BJ (cell line): ENCODE measurements at regions of chr7 and their contacts with region 1.

Region 1: GRCh38 chr7:107150375-107151073 is 18.3 kb upstream of the HBP1 start:
- DNase-seq: peak; percentile 21
- H3K4me3 ChIP-seq: no peak overlapping the region
- H3K27me3 ChIP-seq: no peaks in the 10 kb centered on the region
- CTCF ChIP-seq: peak; percentile 51

Region 2: DNA sequence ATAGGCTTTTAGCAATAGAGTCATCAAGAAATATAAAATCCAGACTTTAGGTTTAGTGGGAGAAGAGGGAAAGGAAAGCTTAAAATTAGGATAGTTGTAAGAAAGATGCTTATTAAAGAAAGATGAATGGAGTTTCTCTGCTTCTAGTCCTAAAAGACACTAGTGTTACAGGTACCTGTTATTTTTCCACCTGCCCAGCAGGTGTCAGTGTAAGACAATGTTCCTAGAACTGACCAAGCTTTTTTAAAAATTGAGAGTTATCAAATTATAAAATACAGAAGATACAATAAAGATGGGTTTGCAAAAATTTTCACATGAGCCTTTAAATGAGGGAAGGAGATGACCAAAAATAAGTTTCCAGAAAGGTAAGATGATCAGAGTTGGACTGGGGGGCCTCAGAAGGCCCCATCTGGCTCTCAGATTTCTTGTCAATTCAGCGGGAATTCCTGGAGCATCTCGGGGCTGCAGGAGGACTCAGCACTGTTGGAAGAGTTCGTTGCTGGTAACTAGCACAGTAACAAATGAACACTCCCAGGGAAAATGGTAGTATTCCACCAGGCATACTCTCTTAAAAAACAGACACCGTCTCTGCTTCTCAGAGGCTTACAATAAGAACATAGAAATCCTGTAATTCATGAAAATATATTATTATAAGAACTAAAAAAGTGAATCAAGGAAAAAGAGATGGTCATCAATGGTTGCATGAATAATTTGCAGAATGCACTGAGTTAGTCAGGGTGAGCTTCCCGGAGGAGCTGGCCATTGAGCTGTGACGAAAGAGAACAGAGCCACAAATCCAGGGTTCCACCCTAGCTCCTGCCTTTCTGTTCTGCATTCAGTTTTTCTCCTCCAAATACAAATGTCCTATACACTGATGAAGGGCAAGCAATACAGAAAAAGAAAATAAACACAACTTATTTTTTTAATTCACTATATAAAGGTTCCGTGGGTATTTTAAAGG is 357.2 kb before region 1 on chr7:
- CTCF ChIA-PET with region 1: interaction called, 11 read pairs
- POLR2A ChIA-PET with region 1: no interaction called
- DNase-seq: no peak
- H3K4me3 ChIP-seq: no peak overlapping the region
- H3K27me3 ChIP-seq: no peaks in the 10 kb centered on the region
- CTCF ChIP-seq: peak; percentile 50

Region 3: GRCh38 chr7:106947244-106947728 is 203.2 kb before region 1 on chr7:
- CTCF ChIA-PET with region 1: interaction called, 133 read pairs
- POLR2A ChIA-PET with region 1: no interaction called
- DNase-seq: peak; percentile 38
- H3K4me3 ChIP-seq: no peak overlapping the region
- H3K27me3 ChIP-seq: peaks cover 2% of the 10 kb centered on the region; the same call in 1 of the 2 replicates
- CTCF ChIP-seq: peak; percentile 77

Region 4: GRCh38 chr7:107130487-107131225 is 19.9 kb before region 1 on chr7:
- CTCF ChIA-PET with region 1: interaction called, 12 read pairs
- POLR2A ChIA-PET with region 1: no interaction called
- DNase-seq: no peak
- H3K4me3 ChIP-seq: no peak overlapping the region
- H3K27me3 ChIP-seq: no peaks in the 10 kb centered on the region
- CTCF ChIP-seq: no peak

Region 5: GRCh38 chr7:107138696-107139420 is 11.7 kb before region 1 on chr7:
- CTCF ChIA-PET with region 1: interaction called, 13 read pairs
- POLR2A ChIA-PET with region 1: no interaction called
- DNase-seq: no peak
- H3K4me3 ChIP-seq: no peak overlapping the region
- H3K27me3 ChIP-seq: no peaks in the 10 kb centered on the region
- CTCF ChIP-seq: no peak

Region 6: GRCh38 chr7:107168233-107169119 is 18.0 kb after region 1 on chr7 and contains the start of gene HBP1:
- CTCF ChIA-PET with region 1: interaction called, 22 read pairs
- POLR2A ChIA-PET with region 1: interaction called, 22 read pairs
- DNase-seq: peak; percentile 100
- H3K4me3 ChIP-seq: peak within 1 kb of the TSS; percentile 100
- H3K27me3 ChIP-seq: no peaks in the 10 kb centered on the region
- CTCF ChIP-seq: no peak
- polyA plus RNA-seq, gene HBP1: 49.9 and 78.7 TPM in 2 replicates

Region 7: DNA sequence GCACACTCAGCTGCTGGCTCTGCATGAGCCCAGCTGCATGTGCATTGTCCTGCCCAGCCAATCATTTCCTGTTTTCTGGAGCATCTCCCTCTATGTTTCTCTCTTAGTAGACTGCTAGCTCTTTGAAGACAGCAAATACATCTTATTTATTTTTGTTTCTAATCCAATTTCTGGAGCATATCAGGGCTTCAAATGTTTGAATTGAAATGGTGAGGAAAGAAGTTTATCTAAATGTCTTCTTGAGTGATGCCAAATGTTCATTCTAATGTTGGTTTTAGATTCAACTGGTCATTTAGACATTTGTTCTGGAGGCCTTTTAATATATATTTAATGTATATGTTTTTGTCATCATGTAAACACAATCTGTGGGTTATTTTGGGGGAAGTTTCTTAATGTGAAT is 1561.1 kb after region 1 on chr7:
- CTCF ChIA-PET with region 1: no interaction called
- POLR2A ChIA-PET with region 1: no interaction called
- DNase-seq: no peak
- H3K4me3 ChIP-seq: no peak overlapping the region
- H3K27me3 ChIP-seq: no peaks in the 10 kb centered on the region
- CTCF ChIP-seq: no peak